SK-N-SH (cell line): ENCODE measurements at regions of chr18 and their contacts with region 1.

Region 1: DNA sequence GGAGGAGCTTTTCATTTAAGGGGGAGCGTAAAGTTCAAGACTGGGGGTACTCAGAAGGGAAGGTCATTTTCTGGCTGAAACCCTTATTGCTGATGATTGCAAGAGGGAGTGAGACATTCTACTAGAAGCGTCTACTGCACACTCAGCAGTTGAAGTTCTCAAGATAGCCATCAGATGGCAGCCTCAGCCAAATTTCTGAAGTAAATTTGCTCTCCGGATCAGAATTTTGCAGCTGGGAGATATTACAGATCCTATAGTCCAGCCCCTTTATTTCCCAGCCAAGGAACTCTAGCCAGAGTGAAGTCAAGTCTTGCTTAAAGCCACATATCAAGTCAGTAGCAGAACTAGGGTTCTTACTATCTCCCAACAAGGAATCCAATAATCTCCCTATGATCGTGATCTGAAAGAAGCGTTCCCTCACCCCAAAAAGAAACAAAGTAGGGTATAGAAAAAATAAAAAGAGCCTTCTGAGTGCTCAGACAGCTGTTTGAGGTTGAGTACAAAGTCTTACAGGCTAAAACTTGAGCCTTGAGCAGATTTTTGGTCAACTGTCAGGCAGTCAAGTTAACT is 24.0 kb downstream of the RAX start:
- DNase-seq: peak; percentile 76
- H3K4me3 ChIP-seq: peak overlapping the region in 1 of 2 experiments; percentile 4; a peak in 1 of 4 replicates
- H3K27ac ChIP-seq: no peak overlapping the region
- H3K4me1 ChIP-seq: 0 out of 4 replicates have a peak, but pooled peaks cover 0 to 4% of the 10 kb centered on the region in 2 experiments
- H3K27me3 ChIP-seq: peaks cover 17% of the 10 kb centered on the region; the same call in 1 of the 2 replicates
- CTCF ChIP-seq: peak; percentile 78
- EP300 ChIP-seq: no peak
- RAD21 ChIP-seq: peak; percentile 93

Region 2: GRCh38 chr18:59096098-59096789 is 153.0 kb before region 1 on chr18:
- CTCF ChIA-PET with region 1: no interaction called
- POLR2A ChIA-PET with region 1: no interaction called
- DNase-seq: peak; percentile 55
- H3K4me3 ChIP-seq: no peak overlapping the region
- H3K27ac ChIP-seq: peak overlapping the region in 1 of 2 experiments; percentile 8; a peak in 1 of 4 replicates
- H3K4me1 ChIP-seq: peaks cover 8 to 10% of the 10 kb centered on the region in 2 experiments; a peak in 2 of 4 replicates
- H3K27me3 ChIP-seq: peaks cover 6% of the 10 kb centered on the region; the same call in 1 of the 2 replicates
- CTCF ChIP-seq: no peak
- EP300 ChIP-seq: peak in 1 of 2 experiments; percentile 15; a peak in 1 of 4 replicates
- RAD21 ChIP-seq: peak; percentile 29

Region 3: DNA sequence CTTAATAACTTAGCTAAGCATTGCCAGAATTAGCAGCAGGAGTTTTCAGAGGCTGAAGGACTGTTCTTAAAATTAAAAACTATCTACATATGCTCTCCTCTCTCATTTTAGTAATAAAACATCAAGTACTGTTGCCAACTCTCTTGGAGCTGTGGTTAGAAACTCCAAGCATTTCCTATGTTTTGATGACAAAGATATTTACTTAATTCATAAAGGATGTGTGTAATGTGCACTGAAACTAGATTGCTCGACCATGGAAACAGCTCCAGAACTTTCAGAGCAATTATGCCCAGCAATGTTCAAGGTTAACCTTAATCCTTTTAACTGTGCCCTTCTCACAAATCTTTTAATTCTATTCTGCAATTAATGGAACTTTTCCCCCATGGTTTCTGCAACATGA is 20.9 kb before region 1 on chr18:
- CTCF ChIA-PET with region 1: interaction called, 37 read pairs
- POLR2A ChIA-PET with region 1: no interaction called
- DNase-seq: no peak
- H3K4me3 ChIP-seq: no peak overlapping the region
- H3K27ac ChIP-seq: peak overlapping the region; percentile 57 to 83; a peak in 3 of 4 replicates
- H3K4me1 ChIP-seq: peaks cover 2 to 53% of the 10 kb centered on the region in 2 experiments; a peak in 3 of 4 replicates
- H3K27me3 ChIP-seq: no peaks in the 10 kb centered on the region
- CTCF ChIP-seq: no peak
- EP300 ChIP-seq: no peak
- RAD21 ChIP-seq: no peak

Region 4: DNA sequence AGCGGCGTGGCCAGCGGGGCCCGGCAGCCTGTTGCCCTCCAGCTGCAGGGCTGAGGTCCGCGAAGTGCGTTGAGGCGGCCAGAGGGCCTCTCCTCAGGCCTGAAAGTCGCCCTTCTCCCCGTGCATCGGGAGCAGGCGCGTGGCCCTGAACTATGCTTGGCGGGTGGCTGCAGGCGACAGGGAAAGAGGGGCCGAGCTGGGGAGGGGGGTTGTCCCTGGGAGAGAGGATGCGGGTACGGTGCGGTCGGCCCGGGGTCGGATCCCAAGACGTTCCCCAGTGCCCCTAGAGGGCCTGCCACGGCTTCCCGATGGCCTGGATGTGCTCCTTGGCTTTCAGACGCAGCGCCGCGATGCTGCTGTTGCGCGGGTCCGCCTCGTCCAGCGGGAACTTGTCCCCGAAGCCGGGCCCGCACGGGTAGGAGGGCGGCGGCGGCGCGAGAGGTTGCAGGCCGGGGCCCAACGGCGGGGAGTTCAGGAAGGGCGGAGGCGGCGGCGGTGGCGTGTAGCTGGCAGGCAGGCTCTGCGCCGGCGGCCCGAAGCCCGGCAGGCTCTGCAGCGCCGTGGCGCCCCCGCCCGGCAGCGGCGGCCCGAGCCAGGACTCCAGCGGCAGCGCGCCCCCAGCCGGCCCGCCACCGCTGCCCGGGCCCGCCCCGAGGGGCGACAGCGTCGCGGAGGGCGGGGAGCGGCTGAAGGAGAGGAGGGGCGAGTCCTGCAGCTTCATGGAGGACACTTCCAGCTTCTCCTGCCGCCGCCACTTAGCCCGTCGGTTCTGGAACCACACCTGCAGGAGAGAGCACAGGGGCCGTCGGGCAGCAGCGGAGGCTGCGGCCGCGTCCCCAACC is 19.7 kb after region 1 on chr18:
- CTCF ChIA-PET with region 1: interaction called, 92 read pairs
- POLR2A ChIA-PET with region 1: no interaction called
- DNase-seq: peak; percentile 93
- H3K4me3 ChIP-seq: peak overlapping the region in 1 of 2 experiments; percentile 38; a peak in 3 of 4 replicates
- H3K27ac ChIP-seq: no peak overlapping the region
- H3K4me1 ChIP-seq: peaks cover 4 to 12% of the 10 kb centered on the region in 2 experiments; a peak in 2 of 4 replicates
- H3K27me3 ChIP-seq: peaks cover 98% of the 10 kb centered on the region
- CTCF ChIP-seq: no peak; the same call in none of the 2 replicates
- EP300 ChIP-seq: no peak
- RAD21 ChIP-seq: no peak; the same call in 1 of the 2 replicates

Region 5: GRCh38 chr18:59286341-59286740 is 37.1 kb after region 1 on chr18:
- CTCF ChIA-PET with region 1: interaction called, 11 read pairs
- POLR2A ChIA-PET with region 1: no interaction called
- DNase-seq: no peak
- H3K4me3 ChIP-seq: no peak overlapping the region
- H3K27ac ChIP-seq: no peak overlapping the region
- H3K4me1 ChIP-seq: no peaks in the 10 kb centered on the region
- H3K27me3 ChIP-seq: peaks cover 38% of the 10 kb centered on the region; the same call in 1 of the 2 replicates
- CTCF ChIP-seq: no peak
- EP300 ChIP-seq: no peak
- RAD21 ChIP-seq: no peak

Region 6: DNA sequence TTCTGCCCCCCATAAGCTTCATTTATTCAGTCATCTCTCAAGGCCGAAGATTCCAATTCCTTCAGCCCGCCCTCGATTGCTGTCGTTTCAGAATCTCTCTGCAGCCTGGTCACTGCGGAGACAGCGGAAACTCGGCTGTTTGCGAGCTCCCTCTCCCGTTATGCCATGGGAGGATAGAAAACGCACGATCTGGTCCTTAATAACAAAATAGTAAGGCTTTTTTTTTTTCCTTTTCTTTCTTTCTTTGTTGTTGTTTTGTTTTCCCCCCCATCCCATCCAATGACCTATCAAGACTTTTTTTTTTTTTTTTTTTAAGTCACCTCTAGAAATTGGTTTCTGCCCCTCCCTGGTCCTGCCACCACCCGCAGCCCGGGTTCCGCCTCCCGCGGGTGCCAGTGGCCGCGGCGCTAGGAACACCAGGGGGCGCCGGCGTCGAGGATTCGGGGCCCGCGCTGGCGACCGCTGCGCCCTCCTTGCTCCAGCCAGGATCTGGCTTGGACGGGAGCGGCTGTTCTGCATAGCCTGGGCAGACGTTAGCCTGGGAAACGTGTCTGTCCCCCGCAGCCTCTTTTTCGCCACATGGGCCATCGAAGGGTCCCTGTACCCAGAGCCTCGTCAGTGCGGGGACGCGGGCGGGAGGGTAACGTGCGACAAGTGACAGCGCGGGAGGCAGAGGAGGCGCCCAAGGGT is 59.1 kb after region 1 on chr18:
- CTCF ChIA-PET with region 1: interaction called, 92 read pairs
- POLR2A ChIA-PET with region 1: no interaction called
- DNase-seq: peak; percentile 92
- H3K4me3 ChIP-seq: peak overlapping the region; percentile 36 to 65
- H3K27ac ChIP-seq: no peak overlapping the region
- H3K4me1 ChIP-seq: peaks cover 0 to 3% of the 10 kb centered on the region in 2 experiments; a peak in 1 of 4 replicates
- H3K27me3 ChIP-seq: peaks cover 31% of the 10 kb centered on the region; the same call in 1 of the 2 replicates
- CTCF ChIP-seq: peak; percentile 95
- EP300 ChIP-seq: no peak
- RAD21 ChIP-seq: peak; percentile 71

Region 7: GRCh38 chr18:59395226-59396110 is 146.2 kb after region 1 on chr18:
- CTCF ChIA-PET with region 1: interaction called, 143 read pairs
- POLR2A ChIA-PET with region 1: no interaction called
- DNase-seq: no peak
- H3K4me3 ChIP-seq: no peak overlapping the region
- H3K27ac ChIP-seq: no peak overlapping the region
- H3K4me1 ChIP-seq: no peaks in the 10 kb centered on the region
- H3K27me3 ChIP-seq: no peaks in the 10 kb centered on the region
- CTCF ChIP-seq: no peak
- EP300 ChIP-seq: no peak
- RAD21 ChIP-seq: no peak

Region 8: DNA sequence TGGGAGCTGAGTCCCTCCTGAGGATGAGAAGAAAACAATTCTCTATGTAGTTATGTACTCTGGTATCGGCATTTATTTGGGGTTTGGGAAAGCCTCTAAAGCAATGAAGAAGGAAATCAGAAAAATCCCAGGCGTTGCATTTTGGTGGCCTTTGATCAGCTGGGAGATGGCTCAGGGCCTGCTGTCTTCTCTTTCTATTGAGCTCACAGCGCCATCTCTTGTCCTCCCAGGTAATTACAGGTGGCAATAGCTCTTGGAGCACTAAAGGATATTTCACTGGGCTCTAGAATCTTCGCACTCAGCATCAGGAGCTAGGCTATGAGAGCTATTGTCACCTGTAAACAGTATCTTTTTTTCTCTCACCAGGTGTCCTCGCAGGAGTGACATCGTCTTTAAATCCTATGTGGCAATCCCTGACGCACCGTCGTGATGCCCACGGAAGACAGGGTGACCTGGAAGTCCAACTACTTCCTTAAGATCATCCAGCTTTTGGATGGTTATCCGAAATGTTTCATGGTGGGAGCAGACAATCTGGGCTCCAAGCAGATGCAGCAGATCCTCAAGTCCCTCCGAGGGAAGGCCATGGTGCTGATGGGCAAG is 574.4 kb after region 1 on chr18:
- CTCF ChIA-PET with region 1: interaction called, 27 read pairs
- POLR2A ChIA-PET with region 1: no interaction called
- DNase-seq: peak; percentile 64
- H3K4me3 ChIP-seq: no peak overlapping the region; a peak in 1 of 4 replicates
- H3K27ac ChIP-seq: peak overlapping the region in 1 of 2 experiments; percentile 54; a peak in 2 of 4 replicates
- H3K4me1 ChIP-seq: peaks cover 0 to 12% of the 10 kb centered on the region in 2 experiments; a peak in 1 of 4 replicates
- H3K27me3 ChIP-seq: no peaks in the 10 kb centered on the region
- CTCF ChIP-seq: peak; percentile 94
- EP300 ChIP-seq: no peak
- RAD21 ChIP-seq: peak; percentile 99